Mammary epithelial cell (primary cell): ENCODE measurements at regions of chr11 and their contacts with region 1.

Region 1: GRCh38 chr11:4454021-4454420 is 4.9 kb downstream of the OR52K2 start:
- DNase-seq: peak; percentile 52
- H3K4me3 ChIP-seq: no peak overlapping the region
- H3K27ac ChIP-seq: peak overlapping the region; percentile 2
- H3K4me1 ChIP-seq: peaks cover 4% of the 10 kb centered on the region
- H3K27me3 ChIP-seq: no peaks in the 10 kb centered on the region
- CTCF ChIP-seq: no peak

Region 2: GRCh38 chr11:4393209-4393857 is 60.7 kb before region 1 on chr11 and contains the start of gene TRIM21:
- CTCF ChIA-PET with region 1: no interaction called
- dilution Hi-C with region 1: no loop called
- in situ Hi-C with region 1: no loop called
- intact Hi-C with region 1: loop called (anchors 5 kb)
- DNase-seq: peak; percentile 82
- H3K4me3 ChIP-seq: peak within 1 kb of the TSS; percentile 91 to 94 (median 93)
- H3K27ac ChIP-seq: peak within 1 kb of the TSS; percentile 52
- H3K4me1 ChIP-seq: peaks cover 5% of the 10 kb centered on the region
- H3K27me3 ChIP-seq: no peaks in the 10 kb centered on the region
- CTCF ChIP-seq: no peak
- total RNA-seq, gene TRIM21: 10.2 to 14.5 TPM